ENCODE measurements at regions of chr21 and their contacts with region 1.

Region 1: DNA sequence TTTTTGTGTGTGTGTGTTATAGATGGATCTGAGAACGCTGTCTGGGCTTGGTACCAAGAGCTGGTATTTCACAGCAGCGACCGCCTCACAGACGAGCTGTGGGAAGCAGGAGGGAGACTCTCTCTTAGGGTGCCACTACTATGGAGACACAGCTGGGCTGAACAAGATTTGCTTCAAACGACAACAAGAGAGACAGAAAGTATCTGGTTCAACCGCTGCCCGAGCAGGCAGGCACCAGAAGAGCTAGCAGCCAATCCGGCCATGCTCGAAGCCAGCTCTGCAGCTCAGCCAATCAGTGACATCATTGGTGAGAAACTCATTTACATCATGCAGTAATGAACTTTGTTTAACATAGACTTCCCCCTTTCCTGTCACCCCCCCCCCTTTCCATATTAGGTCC is 341.3 kb downstream of the USP25 start:
- DNase-seq: peak; percentile 69 to 97 (median 88)

Region 2: GRCh38 chr21:16002874-16003466 is 68.1 kb before region 1 on chr21:
- intact Hi-C with region 1: loop called (anchors 10 kb)
- DNase-seq: peak in 9 of 42 donors; percentile 10 to 47 (median 15)

Region 3: DNA sequence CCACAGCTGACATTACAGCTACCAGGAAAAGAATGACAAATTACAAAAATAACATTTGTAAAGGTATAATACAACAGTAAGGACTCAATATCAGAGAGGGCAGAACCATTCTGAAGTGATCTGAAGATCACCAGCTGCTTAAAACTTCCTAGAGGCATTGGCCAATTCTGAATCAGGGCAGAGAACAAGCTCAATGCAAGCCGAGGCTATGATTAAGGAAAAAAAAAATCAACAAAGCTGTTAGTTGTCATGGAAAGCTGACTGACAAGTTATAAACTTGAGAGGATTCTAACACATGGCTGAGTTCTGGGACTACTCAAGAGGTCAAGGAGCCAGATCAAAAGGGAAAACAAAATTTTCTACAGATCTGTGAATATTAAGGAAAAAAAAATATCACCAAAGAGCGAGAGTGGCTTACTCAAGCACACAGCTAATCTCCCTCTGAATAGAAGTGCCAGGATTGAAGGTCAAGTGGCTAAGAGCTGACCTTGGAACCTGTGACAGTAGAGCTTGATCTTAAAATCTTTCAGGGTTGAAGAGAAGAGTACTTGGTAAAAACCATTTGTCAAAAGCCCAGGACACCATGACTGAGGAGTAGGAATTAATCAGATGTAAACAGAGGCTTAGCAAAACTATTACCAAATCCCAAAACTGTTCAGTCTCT is 42.1 kb after region 1 on chr21:
- intact Hi-C with region 1: no loop called
- DNase-seq: no peak

Region 4: DNA sequence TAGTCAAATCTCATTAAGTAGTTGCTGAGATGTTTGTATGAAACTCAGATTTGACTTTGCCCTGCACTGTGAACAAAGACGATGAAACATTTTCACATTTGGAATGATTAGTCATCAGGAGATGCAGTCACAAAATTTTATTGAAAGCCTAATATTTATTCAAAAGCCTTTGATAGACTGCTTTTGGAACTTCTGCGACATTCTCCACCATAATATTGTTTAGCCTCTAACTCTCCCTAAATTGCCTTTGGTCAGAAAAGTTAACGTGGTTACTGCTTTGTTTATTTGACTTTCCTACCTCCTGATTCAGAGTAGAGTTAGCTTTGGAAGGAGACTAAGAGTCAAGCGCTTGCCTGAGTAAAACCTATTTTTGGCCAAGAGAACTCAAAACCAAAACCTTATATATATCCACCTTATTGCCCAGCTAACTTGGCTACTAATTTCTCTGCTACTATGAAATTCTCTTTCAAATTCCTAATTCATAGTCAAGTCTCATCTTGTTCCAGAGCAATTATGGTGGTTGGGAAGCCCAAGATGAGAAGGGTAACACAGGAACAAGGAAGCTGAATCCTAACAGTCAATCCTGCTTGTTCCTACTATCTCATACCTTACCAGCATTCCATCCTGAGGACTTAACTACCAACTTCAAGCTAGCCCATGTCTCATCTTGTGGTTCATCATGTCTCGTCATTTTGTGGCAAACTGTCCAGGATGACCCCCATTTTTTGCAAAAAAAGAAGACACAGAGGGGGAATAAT is 88.3 kb after region 1 on chr21:
- intact Hi-C with region 1: no loop called
- DNase-seq: no peak

Region 5: DNA sequence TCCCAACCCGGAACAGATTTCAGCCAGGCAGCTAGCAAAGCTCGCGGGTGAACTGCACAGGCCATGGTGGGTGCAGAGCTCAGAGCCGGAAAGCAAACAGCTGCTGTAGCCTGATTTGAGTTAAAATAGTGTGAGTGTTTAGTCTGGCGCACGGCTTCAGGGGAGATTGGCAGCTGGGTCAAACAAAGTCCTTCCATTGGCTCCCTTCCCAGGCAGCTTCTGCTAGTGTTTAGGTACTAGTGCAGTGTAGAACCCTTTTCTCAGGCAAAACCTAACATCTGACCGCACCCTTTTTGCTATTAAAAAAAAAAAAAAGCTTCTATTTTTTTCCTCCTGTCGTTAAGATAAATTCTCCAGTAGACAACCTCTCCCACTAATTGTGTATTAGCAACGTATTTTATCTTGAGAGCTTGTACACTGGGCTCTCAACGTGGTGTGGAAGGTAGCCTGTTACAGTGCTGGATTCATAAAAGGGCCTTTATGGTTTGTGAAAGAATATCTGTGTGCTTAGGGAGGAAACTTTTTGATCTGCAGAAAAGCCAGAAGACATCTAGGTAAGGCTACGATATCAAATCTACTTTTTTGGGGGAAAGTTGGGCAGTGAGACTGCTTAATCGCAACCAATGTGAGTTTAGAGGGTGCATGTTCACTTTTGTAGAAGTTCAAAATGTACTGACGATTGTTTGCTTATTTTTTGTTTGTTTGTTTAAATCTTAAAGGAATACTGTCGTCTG is 348.3 kb after region 1 on chr21:
- intact Hi-C with region 1: loop called (anchors 5 kb)
- DNase-seq: peak; percentile 14 to 84 (median 48)

Measured in head of caudate nucleus (tissue), 42 donors.